H1 (cell line): ENCODE measurements at regions of chr11 and their contacts with region 1.

Region 1: DNA sequence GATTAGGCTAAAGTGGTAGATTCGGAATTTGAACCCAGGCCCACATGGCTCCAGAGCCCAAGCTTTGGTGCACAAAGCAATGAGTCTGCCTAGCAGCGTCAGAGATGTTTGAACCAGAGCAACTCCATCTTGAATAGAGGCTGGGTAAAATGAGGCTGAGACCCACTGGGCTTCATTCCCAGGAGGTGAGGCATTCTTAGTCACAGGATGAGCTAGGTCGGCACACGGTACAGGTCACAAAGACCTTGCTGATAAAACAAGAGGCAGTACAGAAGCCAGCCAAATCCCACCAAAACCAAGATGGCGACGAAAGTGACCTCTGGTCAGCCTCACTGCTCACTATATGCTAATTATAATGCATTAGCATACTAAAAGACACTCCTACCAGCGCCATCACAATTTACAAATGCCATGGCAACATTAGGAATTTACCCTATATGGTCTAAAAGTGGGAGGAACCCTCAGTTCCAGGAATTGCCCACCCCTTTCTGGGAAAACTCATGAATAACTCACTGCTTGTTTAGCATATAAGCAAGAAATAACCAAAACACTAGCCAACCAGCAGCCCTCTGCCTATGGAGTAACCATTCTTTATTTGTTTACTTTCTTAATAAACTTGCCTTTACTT is 40.3 kb upstream of the DAGLA start:
- DNase-seq: no peak
- H3K4me3 ChIP-seq: no peak overlapping the region
- H3K27ac ChIP-seq: no peak overlapping the region
- H3K4me1 ChIP-seq: peaks cover 0 to 5% (median 3%) of the 10 kb centered on the region in 4 experiments; a peak in 2 of 7 replicates
- H3K27me3 ChIP-seq: no peaks in the 10 kb centered on the region
- CTCF ChIP-seq: no peak
- EP300 ChIP-seq: no peak
- POLR2A ChIP-seq: no peak
- RAD21 ChIP-seq: no peak

Region 2: DNA sequence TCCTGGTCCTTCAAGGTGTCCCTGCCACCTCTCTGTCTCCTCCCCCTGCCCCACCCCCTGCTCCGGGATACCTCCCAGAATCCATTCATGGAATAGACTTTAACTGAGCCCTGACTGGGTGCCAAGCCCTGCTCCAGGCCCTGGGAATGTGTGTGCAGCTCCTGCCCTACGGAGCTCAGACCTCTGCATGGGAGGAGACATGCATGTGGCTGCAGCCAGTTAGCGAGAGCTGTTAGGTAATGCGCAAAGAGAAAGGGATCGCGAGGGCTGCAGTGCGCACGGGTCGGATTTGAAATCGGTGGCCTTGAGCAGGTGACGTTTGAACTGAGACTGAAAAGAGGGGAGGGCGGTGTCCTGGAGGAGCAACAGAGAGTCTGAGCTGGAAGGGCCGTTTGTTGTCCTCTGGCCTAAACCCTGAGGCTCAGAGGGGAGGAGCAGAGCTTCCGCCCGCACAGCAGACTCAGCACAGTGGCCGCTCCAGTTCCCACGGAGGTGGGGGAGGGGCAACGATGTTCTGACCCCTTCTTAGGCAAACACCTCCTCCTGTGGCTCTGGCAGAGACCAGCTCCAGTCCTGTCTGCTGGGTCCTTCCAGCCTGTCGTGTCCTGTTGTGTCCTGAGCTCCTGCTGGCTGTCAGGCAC is 151.2 kb before region 1 on chr11:
- CTCF ChIA-PET with region 1: interaction called, 12 read pairs
- POLR2A ChIA-PET with region 1: no interaction called
- DNase-seq: peak in 1 of 2 experiments; percentile 66
- H3K4me3 ChIP-seq: no peak overlapping the region
- H3K27ac ChIP-seq: no peak overlapping the region
- H3K4me1 ChIP-seq: peaks cover 0 to 23% (median 17%) of the 10 kb centered on the region in 4 experiments; a peak in 6 of 7 replicates
- H3K27me3 ChIP-seq: 0 out of 7 replicates have a peak, but pooled peaks cover 0 to 2% (median 0%) of the 10 kb centered on the region in 4 experiments
- CTCF ChIP-seq: no peak
- EP300 ChIP-seq: no peak
- POLR2A ChIP-seq: no peak
- RAD21 ChIP-seq: no peak

Region 3: DNA sequence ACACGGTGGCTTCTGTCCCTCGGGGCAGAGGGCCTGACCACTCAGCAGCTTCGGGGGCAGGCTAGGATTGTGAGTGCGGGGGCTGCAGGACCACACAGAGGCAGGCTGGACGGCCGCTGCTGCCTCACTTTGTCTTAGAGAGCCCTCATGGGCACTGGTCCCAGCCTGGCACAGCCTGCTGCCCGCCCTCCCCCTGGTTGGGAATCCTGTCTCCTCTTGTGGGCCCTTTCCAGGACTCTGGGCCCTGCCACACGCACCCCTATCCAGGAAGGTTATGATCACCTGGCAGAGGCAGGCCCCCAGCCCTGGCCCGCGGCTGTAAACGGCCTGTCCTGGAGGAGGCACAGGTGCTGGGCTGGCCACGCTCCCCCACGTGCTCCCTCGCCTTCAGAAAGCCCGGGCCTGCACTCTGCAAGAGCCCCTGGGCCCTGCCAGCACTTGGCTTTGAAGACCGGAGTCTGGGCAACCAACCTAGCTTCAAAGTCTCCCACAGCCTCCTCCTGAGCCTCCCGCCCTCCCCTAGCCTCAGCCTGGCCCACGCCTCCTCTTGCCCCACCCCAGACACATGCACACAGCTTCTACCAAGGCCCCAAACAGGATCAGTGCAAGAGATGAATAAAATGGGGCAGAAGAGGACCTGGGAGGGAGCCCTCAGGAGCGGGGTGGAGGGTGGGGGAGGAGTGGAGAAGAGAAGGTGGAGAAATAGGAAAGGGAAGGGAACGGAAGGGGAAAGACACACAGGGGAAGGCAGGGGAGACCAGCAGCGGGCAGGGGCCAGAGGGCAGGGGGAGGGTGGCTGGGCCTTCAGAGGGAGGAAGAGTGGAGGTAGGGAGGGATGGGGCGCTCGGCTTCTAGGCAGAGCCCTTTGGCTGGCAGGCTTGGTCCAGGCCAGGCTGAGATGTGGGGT is 90.0 kb before region 1 on chr11:
- CTCF ChIA-PET with region 1: interaction called, 14 read pairs
- POLR2A ChIA-PET with region 1: no interaction called
- DNase-seq: no peak
- H3K4me3 ChIP-seq: no peak overlapping the region
- H3K27ac ChIP-seq: no peak overlapping the region
- H3K4me1 ChIP-seq: peaks cover 0 to 25% (median 8%) of the 10 kb centered on the region in 4 experiments; a peak in 5 of 7 replicates
- H3K27me3 ChIP-seq: peaks cover 0 to 8% (median 8%) of the 10 kb centered on the region in 4 experiments; a peak in 5 of 7 replicates
- CTCF ChIP-seq: no peak
- EP300 ChIP-seq: no peak
- POLR2A ChIP-seq: no peak
- RAD21 ChIP-seq: no peak

Region 4: GRCh38 chr11:61596166-61596938 is 43.6 kb before region 1 on chr11:
- CTCF ChIA-PET with region 1: interaction called, 335 read pairs
- POLR2A ChIA-PET with region 1: no interaction called
- DNase-seq: no peak
- H3K4me3 ChIP-seq: no peak overlapping the region
- H3K27ac ChIP-seq: no peak overlapping the region
- H3K4me1 ChIP-seq: peaks cover 5 to 33% (median 24%) of the 10 kb centered on the region in 4 experiments
- H3K27me3 ChIP-seq: no peaks in the 10 kb centered on the region; a peak in 2 of 7 replicates
- CTCF ChIP-seq: no peak
- EP300 ChIP-seq: no peak
- POLR2A ChIP-seq: no peak
- RAD21 ChIP-seq: no peak

Region 5: GRCh38 chr11:61654397-61654829 is 14.5 kb after region 1 on chr11:
- CTCF ChIA-PET with region 1: interaction called, 33 read pairs
- POLR2A ChIA-PET with region 1: interaction called, 3 read pairs
- DNase-seq: no peak
- H3K4me3 ChIP-seq: no peak overlapping the region
- H3K27ac ChIP-seq: no peak overlapping the region
- H3K4me1 ChIP-seq: peaks cover 6 to 15% (median 10%) of the 10 kb centered on the region in 4 experiments
- H3K27me3 ChIP-seq: no peaks in the 10 kb centered on the region
- CTCF ChIP-seq: no peak
- EP300 ChIP-seq: no peak
- POLR2A ChIP-seq: no peak
- RAD21 ChIP-seq: no peak